HepG2 (cell line): ENCODE measurements at regions of chr7 and their contacts with region 1.

Region 1: GRCh38 chr7:37117292-37117691 is 331.4 kb downstream of the ELMO1 start:
- DNase-seq: no peak
- ATAC-seq: no peak
- H3K4me3 ChIP-seq: no peak overlapping the region
- H3K27ac ChIP-seq: no peak overlapping the region
- H3K4me1 ChIP-seq: peaks cover 5% of the 10 kb centered on the region; the same call in 1 of the 2 replicates
- H3K27me3 ChIP-seq: no peaks in the 10 kb centered on the region; a peak in 1 of 5 replicates
- CTCF ChIP-seq: no peak
- EP300 ChIP-seq: no peak
- POLR2A ChIP-seq: no peak
- RAD21 ChIP-seq: no peak

Region 2: DNA sequence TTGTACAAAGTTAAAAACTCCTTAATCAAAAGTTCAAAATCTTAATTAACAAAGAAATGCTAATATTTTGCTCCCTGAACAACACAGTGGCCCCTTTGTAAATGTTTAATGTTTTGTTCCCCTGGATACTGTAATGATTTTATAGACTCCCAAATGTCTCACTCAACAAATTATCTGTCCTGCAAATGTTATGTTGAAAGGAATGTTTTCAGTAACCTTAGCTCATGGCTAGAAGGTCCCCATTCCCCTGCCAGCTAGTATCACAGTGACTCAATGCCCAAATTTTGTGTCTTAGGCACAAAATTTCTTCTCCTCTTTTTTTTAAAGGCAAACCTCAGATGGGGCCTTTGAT is 32.5 kb after region 1 on chr7:
- CTCF ChIA-PET with region 1: no interaction called
- POLR2A ChIA-PET with region 1: no interaction called
- in situ Hi-C with region 1: no loop called
- intact Hi-C with region 1: loop called (anchors 5 kb)
- DNase-seq: no peak
- ATAC-seq: peak; percentile 47; the same call in 2 of the 3 replicates
- H3K4me3 ChIP-seq: no peak overlapping the region
- H3K27ac ChIP-seq: no peak overlapping the region
- H3K4me1 ChIP-seq: peaks cover 56% of the 10 kb centered on the region
- H3K27me3 ChIP-seq: no peaks in the 10 kb centered on the region
- CTCF ChIP-seq: no peak
- EP300 ChIP-seq: no peak
- POLR2A ChIP-seq: no peak
- RAD21 ChIP-seq: no peak